PC-3 (cell line): ENCODE measurements at regions of chr7 and their contacts with region 1.

Region 1: DNA sequence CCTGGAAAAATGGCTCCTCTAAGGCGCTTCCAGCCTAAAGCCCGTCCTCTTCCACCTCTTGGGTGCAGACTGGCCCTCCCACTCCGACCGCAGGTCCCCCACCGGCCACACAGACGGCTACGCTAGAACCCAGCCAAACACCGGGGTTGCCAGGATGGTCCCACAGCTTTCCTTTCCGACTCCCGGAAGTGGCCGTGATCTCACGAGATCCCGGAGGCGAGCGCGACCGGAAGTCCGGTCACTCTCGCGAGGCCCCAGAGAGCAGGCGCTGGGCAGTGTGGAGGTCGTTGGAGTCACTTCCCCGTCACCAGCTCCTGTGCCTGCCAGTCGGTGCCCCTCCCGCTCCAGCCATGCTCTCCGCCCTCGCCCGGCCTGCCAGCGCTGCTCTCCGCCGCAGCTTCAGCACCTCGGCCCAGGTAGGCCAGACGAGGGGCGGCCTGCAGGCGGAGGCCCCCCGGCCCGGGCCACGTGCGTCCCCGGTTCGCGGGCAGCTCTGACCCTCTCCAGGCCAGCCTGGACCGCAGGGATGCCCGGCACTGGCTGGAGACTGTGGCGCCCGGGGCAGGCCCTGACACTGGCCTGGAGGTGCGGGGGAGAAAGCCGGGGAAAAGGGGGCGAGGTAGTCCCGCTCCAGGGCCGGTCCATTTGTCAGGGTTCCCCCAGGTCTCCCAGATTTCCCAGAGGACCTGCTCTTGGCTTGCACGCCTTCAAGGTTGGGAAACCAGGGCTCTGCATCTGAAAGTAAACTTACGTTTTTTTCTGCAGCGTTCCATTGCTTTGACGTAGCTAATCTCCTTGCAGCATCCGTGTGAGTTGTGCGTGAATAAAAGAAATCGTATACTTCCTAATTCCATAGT is at the starts of genes MDH2 and STYXL1:
- DNase-seq: peak; percentile 97
- ATAC-seq: peak; percentile 95
- H3K4me3 ChIP-seq: peak within 1 kb of the TSS; percentile 92
- H3K27ac ChIP-seq: peak within 1 kb of the TSS; percentile 81
- H3K4me1 ChIP-seq: peaks cover 25% of the 10 kb centered on the region
- H3K27me3 ChIP-seq: no peaks in the 10 kb centered on the region
- CTCF ChIP-seq: no peak
- total RNA-seq, gene MDH2: 163 and 174 TPM in 2 replicates
- total RNA-seq, gene STYXL1: 57.4 and 61.3 TPM in 2 replicates

Region 2: GRCh38 chr7:75899091-75899490 is 148.9 kb before region 1 on chr7:
- CTCF ChIA-PET with region 1: no interaction called
- POLR2A ChIA-PET with region 1: no interaction called
- intact Hi-C with region 1: no loop called
- DNase-seq: no peak
- ATAC-seq: no peak
- H3K4me3 ChIP-seq: no peak overlapping the region
- H3K27ac ChIP-seq: no peak overlapping the region
- H3K4me1 ChIP-seq: no peaks in the 10 kb centered on the region
- H3K27me3 ChIP-seq: no peaks in the 10 kb centered on the region
- CTCF ChIP-seq: no peak

Region 3: GRCh38 chr7:75994388-75995051 is 53.5 kb before region 1 on chr7 and contains the start of gene TMEM120A:
- CTCF ChIA-PET with region 1: no interaction called
- POLR2A ChIA-PET with region 1: no interaction called
- intact Hi-C with region 1: no loop called
- DNase-seq: peak; percentile 93
- ATAC-seq: peak; percentile 91
- H3K4me3 ChIP-seq: peak within 1 kb of the TSS; percentile 91
- H3K27ac ChIP-seq: no peak within 1 kb of the TSS
- H3K4me1 ChIP-seq: peaks cover 9% of the 10 kb centered on the region
- H3K27me3 ChIP-seq: no peaks in the 10 kb centered on the region
- CTCF ChIP-seq: no peak
- total RNA-seq, gene TMEM120A: 17.9 and 18.6 TPM in 2 replicates

Region 4: DNA sequence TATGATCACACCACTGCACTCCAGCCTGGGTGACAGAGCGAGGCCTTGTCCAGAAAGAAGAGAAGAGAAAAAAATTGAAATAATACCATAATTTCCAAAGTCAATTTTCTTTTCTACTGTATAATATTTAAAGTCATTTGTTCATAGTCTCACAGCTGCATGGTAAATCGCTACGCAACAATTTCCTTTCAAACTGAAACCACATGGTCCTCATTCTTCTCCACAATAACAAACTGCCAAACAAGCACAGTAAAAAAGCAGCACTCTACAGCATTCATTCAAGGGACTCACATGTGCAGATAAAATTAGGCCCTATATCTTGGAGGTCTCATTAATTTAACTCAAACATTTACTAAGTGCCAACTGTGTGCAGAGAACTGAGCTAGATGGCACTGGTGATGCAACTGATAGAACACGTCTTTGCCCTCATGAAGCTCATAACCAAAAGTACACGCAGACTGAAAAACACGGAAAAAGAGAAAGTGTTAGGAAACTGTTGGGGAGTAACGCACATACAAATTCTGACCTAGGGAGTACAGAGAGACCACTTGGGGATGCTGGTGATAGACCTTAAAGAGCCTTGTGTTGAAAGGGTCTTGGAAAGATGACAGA is 85.2 kb after region 1 on chr7:
- CTCF ChIA-PET with region 1: interaction called, 5 read pairs
- POLR2A ChIA-PET with region 1: no interaction called
- intact Hi-C with region 1: loop called (anchors 1 kb)
- DNase-seq: no peak
- ATAC-seq: no peak
- H3K4me3 ChIP-seq: no peak overlapping the region
- H3K27ac ChIP-seq: no peak overlapping the region
- H3K4me1 ChIP-seq: no peaks in the 10 kb centered on the region
- H3K27me3 ChIP-seq: no peaks in the 10 kb centered on the region
- CTCF ChIP-seq: no peak

Region 5: GRCh38 chr7:76165777-76166403 is 117.9 kb after region 1 on chr7:
- CTCF ChIA-PET with region 1: no interaction called
- POLR2A ChIA-PET with region 1: no interaction called
- intact Hi-C with region 1: no loop called
- DNase-seq: no peak
- ATAC-seq: no peak
- H3K4me3 ChIP-seq: peak overlapping the region; percentile 84
- H3K27ac ChIP-seq: peak overlapping the region; percentile 25; the same call in 1 of the 2 replicates
- H3K4me1 ChIP-seq: no peaks in the 10 kb centered on the region
- H3K27me3 ChIP-seq: no peaks in the 10 kb centered on the region
- CTCF ChIP-seq: no peak

Region 6: GRCh38 chr7:76193883-76194282 is 145.8 kb after region 1 on chr7:
- CTCF ChIA-PET with region 1: no interaction called
- POLR2A ChIA-PET with region 1: no interaction called
- intact Hi-C with region 1: no loop called
- DNase-seq: no peak
- ATAC-seq: no peak
- H3K4me3 ChIP-seq: no peak overlapping the region
- H3K27ac ChIP-seq: no peak overlapping the region
- H3K4me1 ChIP-seq: no peaks in the 10 kb centered on the region
- H3K27me3 ChIP-seq: no peaks in the 10 kb centered on the region
- CTCF ChIP-seq: no peak